ENCODE measurements at regions of chr12 and their contacts with region 1.

Region 1: GRCh38 chr12:55973598-55974307 is at the start of gene RAB5B:
- DNase-seq: peak; percentile 87 to 100 (median 94)
- ATAC-seq: peak; percentile 95
- H3K4me3 ChIP-seq: peak within 1 kb of the TSS; percentile 68
- H3K27ac ChIP-seq: peak within 1 kb of the TSS; percentile 88
- H3K4me1 ChIP-seq: peaks cover 14 to 21% of the 10 kb centered on the region in 2 experiments
- H3K27me3 ChIP-seq: no peaks in the 10 kb centered on the region
- CTCF ChIP-seq: peak in 1 of 3 experiments; percentile 5; a peak in 1 of 6 replicates
- EP300 ChIP-seq: peak; percentile 7; the same call in 1 of the 2 replicates
- POLR2A ChIP-seq: peak; percentile 90
- RAD21 ChIP-seq: no peak
- polyA plus RNA-seq, gene RAB5B: 6.8 to 12.2 TPM

Region 2: GRCh38 chr12:54933376-54933775 is 1040.4 kb before region 1 on chr12:
- CTCF ChIA-PET with region 1: no interaction called
- POLR2A ChIA-PET with region 1: no interaction called
- in situ Hi-C with region 1: no loop called
- intact Hi-C with region 1: no loop called
- DNase-seq: peak in 1 of 4 experiments; percentile 10
- ATAC-seq: no peak
- H3K4me3 ChIP-seq: no peak overlapping the region
- H3K27ac ChIP-seq: no peak overlapping the region
- H3K4me1 ChIP-seq: peaks cover 0 to 29% of the 10 kb centered on the region in 2 experiments; a peak in 3 of 5 replicates
- H3K27me3 ChIP-seq: no peaks in the 10 kb centered on the region
- CTCF ChIP-seq: no peak
- EP300 ChIP-seq: 0 out of 2 replicates have a peak, but pooled peaks have one; percentile 15
- POLR2A ChIP-seq: no peak
- RAD21 ChIP-seq: no peak

Region 3: DNA sequence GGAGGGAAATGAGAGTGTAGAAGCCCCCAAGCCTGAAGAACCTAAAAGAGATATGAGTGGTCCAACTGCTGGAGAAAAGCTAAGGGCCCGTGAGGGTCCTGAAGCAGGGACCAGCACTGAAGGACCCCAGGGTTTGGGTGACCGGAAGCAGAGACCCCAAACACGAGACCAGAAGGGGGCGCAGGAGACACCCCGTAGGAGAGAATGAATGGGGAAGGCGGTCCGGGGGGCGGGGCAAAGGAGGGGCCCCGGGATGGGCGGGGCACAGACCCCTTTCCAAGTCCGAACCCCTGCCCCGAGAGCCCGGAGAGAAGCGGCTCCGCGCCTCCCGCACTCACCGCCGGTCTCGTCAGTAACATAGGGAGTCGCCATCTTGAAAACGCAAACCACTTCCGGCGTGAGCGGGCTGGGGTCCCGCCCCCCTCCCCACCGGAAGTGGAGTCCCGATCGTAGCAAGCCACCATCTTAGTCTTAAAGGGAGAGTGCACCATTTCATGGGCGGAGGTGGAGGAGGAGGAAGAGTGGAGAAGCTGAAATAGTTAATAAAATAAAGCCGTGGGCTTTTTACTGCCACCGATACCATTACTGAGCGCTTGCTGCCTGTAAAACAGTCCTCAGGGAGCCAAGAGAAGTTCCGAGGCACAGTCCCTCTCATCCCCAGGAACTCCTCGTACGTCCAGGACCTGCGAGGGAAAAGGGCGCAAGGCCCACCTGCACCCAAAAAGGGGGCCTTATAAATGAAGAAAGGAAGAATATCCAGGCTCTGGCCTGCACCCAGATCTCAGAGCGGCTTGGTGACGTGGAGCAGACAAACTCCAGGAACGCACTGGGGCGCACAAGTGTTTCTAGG is 46.8 kb before region 1 on chr12:
- CTCF ChIA-PET with region 1: no interaction called
- POLR2A ChIA-PET with region 1: interaction called, 9 read pairs
- in situ Hi-C with region 1: no loop called
- intact Hi-C with region 1: loop called (anchors 5 kb)
- DNase-seq: peak; percentile 96 to 98 (median 97)
- ATAC-seq: peak; percentile 81
- H3K4me3 ChIP-seq: peak overlapping the region; percentile 69
- H3K27ac ChIP-seq: peak overlapping the region; percentile 95
- H3K4me1 ChIP-seq: peaks cover 21 to 27% of the 10 kb centered on the region in 2 experiments; a peak in 4 of 5 replicates
- H3K27me3 ChIP-seq: no peaks in the 10 kb centered on the region
- CTCF ChIP-seq: peak; percentile 68 to 77 (median 68)
- EP300 ChIP-seq: no peak; the same call in 1 of the 2 replicates
- POLR2A ChIP-seq: no peak; the same call in 1 of the 2 replicates
- RAD21 ChIP-seq: peak in 1 of 2 experiments; percentile 30; a peak in 2 of 4 replicates

Region 4: GRCh38 chr12:55991110-55991509 is 17.4 kb after region 1 on chr12:
- CTCF ChIA-PET with region 1: no interaction called
- POLR2A ChIA-PET with region 1: interaction called, 49 read pairs
- in situ Hi-C with region 1: no loop called
- intact Hi-C with region 1: no loop called
- DNase-seq: no peak
- ATAC-seq: no peak
- H3K4me3 ChIP-seq: no peak overlapping the region
- H3K27ac ChIP-seq: no peak overlapping the region
- H3K4me1 ChIP-seq: no peaks in the 10 kb centered on the region; a peak in 1 of 5 replicates
- H3K27me3 ChIP-seq: no peaks in the 10 kb centered on the region
- CTCF ChIP-seq: no peak
- EP300 ChIP-seq: no peak
- POLR2A ChIP-seq: no peak
- RAD21 ChIP-seq: no peak

Region 5: GRCh38 chr12:55996715-55997534 is 23.2 kb after region 1 on chr12 and contains the start of gene SUOX:
- CTCF ChIA-PET with region 1: no interaction called
- POLR2A ChIA-PET with region 1: interaction called, 31 read pairs
- in situ Hi-C with region 1: no loop called
- intact Hi-C with region 1: no loop called
- DNase-seq: peak; percentile 98 to 99 (median 99)
- ATAC-seq: peak; percentile 100
- H3K4me3 ChIP-seq: peak within 1 kb of the TSS; percentile 60
- H3K27ac ChIP-seq: peak within 1 kb of the TSS; percentile 77
- H3K4me1 ChIP-seq: peaks cover 3 to 19% of the 10 kb centered on the region in 2 experiments; a peak in 4 of 5 replicates
- H3K27me3 ChIP-seq: no peaks in the 10 kb centered on the region
- CTCF ChIP-seq: no peak
- EP300 ChIP-seq: peak; percentile 15
- POLR2A ChIP-seq: peak; percentile 83
- RAD21 ChIP-seq: no peak
- polyA plus RNA-seq, gene SUOX: 9.2 to 21.6 TPM

Region 6: DNA sequence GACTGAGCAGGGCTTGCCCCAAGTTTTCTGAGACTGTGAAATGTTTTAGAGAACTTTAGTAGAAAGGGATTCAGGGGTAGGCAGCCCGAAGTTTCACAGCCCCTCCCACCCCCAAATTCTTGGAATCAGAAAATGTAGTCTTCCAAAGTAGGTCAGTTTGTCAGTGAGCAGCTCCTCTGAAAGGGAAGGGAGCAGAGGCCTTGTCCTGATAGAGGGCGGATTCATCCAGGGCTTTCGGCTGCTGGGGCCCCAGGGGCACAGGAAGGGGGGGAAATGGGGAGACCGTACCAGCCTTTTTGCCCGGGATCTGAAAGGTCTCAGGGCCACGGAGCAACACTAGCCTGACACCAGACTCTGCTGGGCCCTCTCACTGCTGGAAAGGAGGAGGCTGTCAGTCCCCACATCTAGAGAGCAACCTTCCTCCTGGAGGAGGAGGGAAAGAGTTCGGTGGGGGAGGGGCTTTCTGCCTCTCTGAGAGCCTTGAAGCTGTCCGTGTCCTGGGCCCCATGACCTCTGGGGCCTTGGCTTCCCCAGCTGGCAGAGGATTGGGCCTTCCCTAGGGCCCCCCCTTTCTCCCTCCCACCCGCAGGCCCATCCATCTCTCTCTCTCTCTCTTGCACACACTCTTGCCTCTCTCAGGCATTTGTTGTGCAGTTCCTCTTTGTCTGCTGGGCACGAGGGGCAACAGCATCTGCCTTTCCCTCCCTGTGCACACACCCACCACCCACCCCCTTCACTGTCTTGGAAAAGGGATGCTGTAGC is 46.9 kb after region 1 on chr12 and contains the start of gene IKZF4:
- CTCF ChIA-PET with region 1: no interaction called
- POLR2A ChIA-PET with region 1: interaction called, 5 read pairs
- in situ Hi-C with region 1: no loop called
- intact Hi-C with region 1: loop called (anchors 2 kb)
- DNase-seq: peak; percentile 76 to 95 (median 81)
- ATAC-seq: peak; percentile 79
- H3K4me3 ChIP-seq: peak within 1 kb of the TSS; percentile 46
- H3K27ac ChIP-seq: peak within 1 kb of the TSS; percentile 82
- H3K4me1 ChIP-seq: peaks cover 27 to 41% of the 10 kb centered on the region in 2 experiments
- H3K27me3 ChIP-seq: no peaks in the 10 kb centered on the region
- CTCF ChIP-seq: no peak
- EP300 ChIP-seq: no peak; the same call in 1 of the 2 replicates
- POLR2A ChIP-seq: no peak; the same call in 1 of the 2 replicates
- RAD21 ChIP-seq: 0 out of 4 replicates have a peak, but pooled peaks of 1 of the 2 experiments have one; percentile 7
- polyA plus RNA-seq, gene IKZF4: 2.8 to 3.6 TPM

Region 7: GRCh38 chr12:56053407-56053893 is 79.7 kb after region 1 on chr12:
- CTCF ChIA-PET with region 1: no interaction called
- POLR2A ChIA-PET with region 1: no interaction called
- in situ Hi-C with region 1: no loop called
- intact Hi-C with region 1: no loop called
- DNase-seq: no peak
- ATAC-seq: no peak
- H3K4me3 ChIP-seq: no peak overlapping the region
- H3K27ac ChIP-seq: no peak overlapping the region
- H3K4me1 ChIP-seq: no peaks in the 10 kb centered on the region
- H3K27me3 ChIP-seq: no peaks in the 10 kb centered on the region
- CTCF ChIP-seq: no peak
- EP300 ChIP-seq: no peak
- POLR2A ChIP-seq: no peak
- RAD21 ChIP-seq: no peak

Region 8: GRCh38 chr12:56157201-56158028 is 183.7 kb after region 1 on chr12:
- CTCF ChIA-PET with region 1: no interaction called
- POLR2A ChIA-PET with region 1: no interaction called
- in situ Hi-C with region 1: no loop called
- intact Hi-C with region 1: no loop called
- DNase-seq: peak in 1 of 4 experiments; percentile 79
- ATAC-seq: peak; percentile 48
- H3K4me3 ChIP-seq: peak overlapping the region; percentile 51
- H3K27ac ChIP-seq: peak overlapping the region; percentile 98
- H3K4me1 ChIP-seq: peaks cover 41 to 53% of the 10 kb centered on the region in 2 experiments; a peak in 4 of 5 replicates
- H3K27me3 ChIP-seq: no peaks in the 10 kb centered on the region
- CTCF ChIP-seq: peak; percentile 53 to 69 (median 65)
- EP300 ChIP-seq: no peak
- POLR2A ChIP-seq: peak; percentile 60; the same call in 1 of the 2 replicates
- RAD21 ChIP-seq: peak; percentile 14 to 34; a peak in 1 of 4 replicates